Left cardiac atrium (tissue), 4 donors: ENCODE measurements at regions of chr21 and their contacts with region 1.

Region 1: DNA sequence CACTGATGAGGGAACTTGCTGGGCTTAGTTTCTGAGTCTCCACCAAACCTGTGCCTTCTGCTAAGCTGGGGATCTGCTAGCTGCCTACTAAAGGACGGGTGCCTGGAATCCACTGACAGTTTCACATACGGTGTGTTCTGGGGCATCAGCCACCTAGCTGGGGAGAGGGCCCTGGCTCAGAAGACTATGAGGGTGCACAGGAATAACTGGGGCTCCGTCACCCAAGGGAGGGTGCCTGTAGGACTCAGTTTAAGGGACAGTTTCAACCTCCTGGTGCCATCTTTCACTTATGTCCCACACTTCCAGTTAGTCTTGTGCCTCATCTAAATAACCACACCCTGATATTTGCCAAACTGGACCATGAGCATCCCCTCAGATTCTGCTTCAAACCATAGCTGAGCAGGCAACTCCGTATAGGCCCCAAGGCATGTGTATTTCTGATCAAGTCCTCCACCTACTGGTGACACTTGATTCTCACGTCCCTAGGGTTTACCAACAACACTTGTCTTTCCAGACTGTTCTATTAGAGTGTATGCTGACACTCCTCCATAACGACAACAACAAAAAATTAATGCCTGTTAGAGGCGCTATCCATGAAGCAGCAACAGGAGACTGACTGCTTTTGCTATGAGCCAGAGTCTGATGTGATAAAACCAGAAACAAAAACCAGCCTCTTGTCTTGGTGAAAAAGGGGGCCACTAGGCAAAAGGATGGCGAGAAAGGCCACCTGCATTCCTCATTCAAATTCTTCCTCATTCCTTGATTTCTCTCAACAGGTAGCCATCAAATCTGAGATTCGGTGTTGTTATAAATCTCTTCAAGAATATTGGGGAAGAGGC is 55.0 kb upstream of the PAXBP1 start:
- DNase-seq: no peak
- ATAC-seq: peak; percentile 59 to 90

Region 2: DNA sequence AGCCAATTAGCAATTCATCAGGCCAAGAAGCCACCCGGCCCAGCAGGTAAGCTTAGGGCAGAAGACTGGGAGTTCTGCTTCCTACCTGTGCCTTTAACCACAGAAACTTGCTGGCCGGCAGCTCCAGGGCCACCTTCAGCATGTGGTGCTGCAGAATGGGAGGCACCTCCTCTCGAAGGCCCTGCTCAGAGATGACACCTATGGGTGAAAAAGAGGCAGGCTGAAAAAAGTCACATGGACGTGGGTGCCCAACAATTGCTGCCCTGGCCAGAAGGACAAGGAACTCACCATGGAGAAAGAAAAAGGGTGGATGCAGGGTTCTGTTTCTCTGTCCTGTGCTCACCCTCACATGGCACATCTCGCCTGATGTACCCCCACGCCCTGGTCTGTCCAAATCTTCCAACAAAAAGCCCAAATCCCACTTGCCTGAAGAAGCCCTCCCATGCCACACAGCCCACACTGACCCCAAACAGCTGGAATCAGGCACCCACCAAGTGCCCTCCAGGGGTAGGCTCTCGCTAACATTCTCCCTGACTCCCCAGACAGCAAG is 466.8 kb before region 1 on chr21:
- intact Hi-C with region 1: no loop called
- DNase-seq: no peak
- ATAC-seq: no peak

Region 3: DNA sequence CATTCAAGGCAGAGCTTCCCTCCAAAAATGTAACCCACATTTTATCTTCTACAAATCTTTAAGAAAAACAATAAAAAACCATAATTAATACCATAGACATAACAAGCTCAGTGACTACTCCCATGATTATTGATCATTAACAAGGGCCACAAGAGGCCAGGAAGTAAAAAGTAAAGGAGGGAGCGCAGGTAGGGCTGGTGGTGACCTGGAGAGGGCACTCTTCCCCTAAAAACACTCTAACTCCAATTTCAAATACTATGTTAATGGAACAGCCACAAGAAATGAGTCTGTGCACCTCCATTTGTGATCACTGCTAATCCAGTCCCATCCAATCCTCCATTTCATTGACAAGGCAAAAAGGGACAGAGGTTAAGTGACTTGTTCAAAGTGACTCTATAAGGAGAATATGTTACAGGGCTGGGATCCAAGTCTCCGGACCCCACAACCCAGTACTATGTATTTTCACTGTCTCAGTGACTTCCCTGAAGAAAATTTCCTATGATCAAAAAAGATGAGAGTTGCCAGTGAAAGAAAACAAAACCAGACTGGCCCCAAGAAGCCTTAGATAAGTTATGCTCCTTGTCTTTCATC is 173.1 kb before region 1 on chr21:
- intact Hi-C with region 1: loop called in 1 of 2 experiments (anchors 10 kb)
- DNase-seq: no peak
- ATAC-seq: no peak